Mammary epithelial cell (primary cell): ENCODE measurements at regions of chr4 and their contacts with region 1.

Region 1: DNA sequence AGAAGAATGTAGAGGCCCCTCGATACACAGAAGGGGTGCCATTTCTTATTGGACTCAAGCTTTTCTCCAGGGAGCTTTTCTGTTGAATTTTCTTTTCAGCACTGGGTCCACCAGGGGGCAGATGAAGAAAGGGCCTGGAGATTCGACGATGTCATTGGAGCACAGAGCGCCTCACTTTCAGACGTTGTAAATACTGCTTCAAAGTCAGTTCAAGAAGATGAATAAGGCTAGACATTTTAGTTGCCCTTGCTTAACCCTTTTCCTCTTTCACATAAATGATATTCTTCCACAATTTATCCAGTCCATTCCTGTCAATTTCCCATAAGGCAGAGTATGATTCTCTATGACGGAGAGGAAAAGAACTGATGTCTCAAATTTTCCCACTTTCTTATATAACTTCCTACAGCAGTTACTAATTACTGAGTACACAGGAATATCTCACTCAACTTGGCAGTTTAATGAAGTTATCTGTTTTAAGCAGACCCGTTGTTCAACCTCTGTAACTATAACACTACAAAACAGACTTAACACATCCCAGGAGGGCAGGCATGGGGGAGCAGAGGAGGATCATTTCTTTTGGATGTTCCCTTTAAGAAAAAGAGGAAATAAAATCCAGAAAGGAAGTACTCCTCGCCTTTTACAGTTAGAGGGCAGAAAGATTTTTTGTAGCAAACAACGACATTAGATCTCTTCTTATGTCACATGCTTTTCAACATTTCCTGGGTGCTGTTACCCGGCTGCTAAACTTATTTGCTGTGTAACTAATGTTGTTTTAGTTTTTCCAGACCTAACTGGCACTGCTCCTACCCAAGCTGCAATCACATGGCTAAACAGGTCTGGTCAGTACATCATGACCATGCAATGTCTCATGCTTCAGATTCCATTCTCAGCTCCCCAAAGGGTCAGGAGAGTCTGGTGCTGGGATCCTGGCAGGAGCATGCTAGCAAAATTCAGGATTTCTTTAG is 12.2 kb upstream of the CENPU start:
- DNase-seq: peak; percentile 84
- H3K4me3 ChIP-seq: no peak overlapping the region
- H3K27ac ChIP-seq: peak overlapping the region; percentile 64
- H3K4me1 ChIP-seq: peaks cover 34% of the 10 kb centered on the region
- H3K27me3 ChIP-seq: no peaks in the 10 kb centered on the region
- CTCF ChIP-seq: peak; percentile 72 to 84

Region 2: GRCh38 chr4:184815046-184815877 is 69.1 kb after region 1 on chr4:
- CTCF ChIA-PET with region 1: interaction called, 3 read pairs
- dilution Hi-C with region 1: no loop called
- in situ Hi-C with region 1: no loop called
- intact Hi-C with region 1: loop called (anchors 2 kb)
- DNase-seq: peak; percentile 96
- H3K4me3 ChIP-seq: peak overlapping the region; percentile 39 to 47 (median 46)
- H3K27ac ChIP-seq: peak overlapping the region; percentile 55
- H3K4me1 ChIP-seq: peaks cover 48% of the 10 kb centered on the region
- H3K27me3 ChIP-seq: no peaks in the 10 kb centered on the region
- CTCF ChIP-seq: no peak

Region 3: GRCh38 chr4:184911310-184911709 is 165.2 kb after region 1 on chr4:
- CTCF ChIA-PET with region 1: no interaction called
- dilution Hi-C with region 1: no loop called
- in situ Hi-C with region 1: no loop called
- intact Hi-C with region 1: loop called (anchors 1 kb)
- DNase-seq: peak; percentile 97
- H3K4me3 ChIP-seq: no peak overlapping the region
- H3K27ac ChIP-seq: peak overlapping the region; percentile 25
- H3K4me1 ChIP-seq: peaks cover 21% of the 10 kb centered on the region
- H3K27me3 ChIP-seq: no peaks in the 10 kb centered on the region
- CTCF ChIP-seq: no peak

Region 4: GRCh38 chr4:185005216-185005819 is 259.2 kb after region 1 on chr4:
- CTCF ChIA-PET with region 1: interaction called, 3 read pairs
- dilution Hi-C with region 1: no loop called
- in situ Hi-C with region 1: loop called in 1 of 2 experiments (anchors 10 kb)
- intact Hi-C with region 1: no loop called
- DNase-seq: peak; percentile 63
- H3K4me3 ChIP-seq: peak overlapping the region in 1 of 3 experiments; percentile 27
- H3K27ac ChIP-seq: no peak overlapping the region
- H3K4me1 ChIP-seq: peaks cover 5% of the 10 kb centered on the region
- H3K27me3 ChIP-seq: peaks cover 4% of the 10 kb centered on the region
- CTCF ChIP-seq: peak; percentile 84 to 95

Region 5: GRCh38 chr4:185134307-185134869 is 388.3 kb after region 1 on chr4:
- CTCF ChIA-PET with region 1: no interaction called
- dilution Hi-C with region 1: no loop called
- in situ Hi-C with region 1: no loop called
- intact Hi-C with region 1: loop called (anchors 2 kb)
- DNase-seq: peak; percentile 35
- H3K4me3 ChIP-seq: no peak overlapping the region
- H3K27ac ChIP-seq: no peak overlapping the region
- H3K4me1 ChIP-seq: no peaks in the 10 kb centered on the region
- H3K27me3 ChIP-seq: no peaks in the 10 kb centered on the region
- CTCF ChIP-seq: peak; percentile 63 to 76